Caco-2 (cell line): ENCODE measurements at regions of chr18 and their contacts with region 1.

Region 1: GRCh38 chr18:12744103-12744502 is 41.3 kb downstream of the PSMG2 start:
- DNase-seq: peak in 1 of 2 experiments; percentile 38
- H3K4me3 ChIP-seq: no peak overlapping the region
- H3K4me3 Mint-ChIP-seq: no peak overlapping the region
- H3K27ac Mint-ChIP-seq: no peak overlapping the region
- H3K4me1 ChIP-seq: peaks cover 8% of the 10 kb centered on the region; the same call in 1 of the 2 replicates
- H3K4me1 Mint-ChIP-seq: no peaks in the 10 kb centered on the region
- H3K27me3 ChIP-seq: no peaks in the 10 kb centered on the region
- H3K27me3 Mint-ChIP-seq: no peaks in the 10 kb centered on the region
- CTCF ChIP-seq: peak; percentile 31 to 49

Region 2: DNA sequence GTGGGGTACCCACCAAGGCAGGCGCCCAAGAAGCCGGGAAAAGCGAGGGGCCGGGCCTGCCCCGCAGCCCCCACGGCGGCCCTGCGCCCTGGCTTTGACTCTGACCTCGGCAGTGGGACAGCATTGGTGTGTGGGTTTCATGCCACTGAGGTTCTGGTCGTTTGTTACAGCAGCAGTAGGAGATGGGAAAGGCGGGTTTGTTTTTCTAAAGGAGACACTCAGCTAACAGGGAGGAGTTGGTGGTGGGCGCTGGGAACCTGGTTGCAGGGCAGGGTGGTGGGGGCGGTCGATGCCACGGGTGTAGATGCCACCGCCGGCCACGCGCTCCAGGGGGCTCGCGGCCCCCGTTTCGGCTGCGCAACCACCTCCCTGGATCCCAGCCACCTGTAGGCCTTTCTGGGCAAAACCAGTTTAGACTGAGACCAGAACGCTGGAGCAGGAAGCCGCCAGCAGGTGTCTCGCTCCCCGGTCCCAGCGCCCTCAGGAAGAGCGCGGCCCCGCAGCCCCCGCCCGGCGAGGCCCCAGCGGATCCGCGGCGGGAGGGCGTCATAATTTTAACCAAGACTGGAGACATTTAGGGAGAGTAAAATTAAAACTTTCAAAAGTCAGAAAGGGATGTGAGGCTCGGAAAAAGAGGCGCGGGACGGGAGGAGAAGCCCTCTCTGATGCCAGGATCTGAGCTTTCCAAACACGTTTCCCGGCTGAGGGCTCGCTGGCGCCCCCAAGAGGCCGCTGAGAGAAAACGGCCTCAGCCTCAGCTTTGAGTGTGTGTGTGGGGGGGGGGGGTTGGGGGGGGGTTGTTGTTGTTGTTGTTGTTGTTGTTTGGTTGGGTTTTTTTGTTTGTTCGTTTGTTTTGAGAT is 472.5 kb before region 1 on chr18:
- CTCF ChIA-PET with region 1: no interaction called
- POLR2A ChIA-PET with region 1: no interaction called
- intact Hi-C with region 1: no loop called
- DNase-seq: peak; percentile 81 to 88
- H3K4me3 ChIP-seq: peak overlapping the region; percentile 44
- H3K4me3 Mint-ChIP-seq: peak overlapping the region; percentile 79
- H3K27ac Mint-ChIP-seq: peak overlapping the region; percentile 56
- H3K4me1 ChIP-seq: no peaks in the 10 kb centered on the region
- H3K4me1 Mint-ChIP-seq: no peaks in the 10 kb centered on the region
- H3K27me3 ChIP-seq: no peaks in the 10 kb centered on the region
- H3K27me3 Mint-ChIP-seq: no peaks in the 10 kb centered on the region
- CTCF ChIP-seq: peak; percentile 80 to 84

Region 3: GRCh38 chr18:12442946-12443345 is 301.2 kb before region 1 on chr18:
- CTCF ChIA-PET with region 1: no interaction called
- POLR2A ChIA-PET with region 1: no interaction called
- intact Hi-C with region 1: no loop called
- DNase-seq: no peak
- H3K4me3 ChIP-seq: no peak overlapping the region
- H3K4me3 Mint-ChIP-seq: no peak overlapping the region
- H3K27ac Mint-ChIP-seq: no peak overlapping the region
- H3K4me1 ChIP-seq: no peaks in the 10 kb centered on the region
- H3K4me1 Mint-ChIP-seq: no peaks in the 10 kb centered on the region
- H3K27me3 ChIP-seq: no peaks in the 10 kb centered on the region
- H3K27me3 Mint-ChIP-seq: no peaks in the 10 kb centered on the region
- CTCF ChIP-seq: no peak

Region 4: DNA sequence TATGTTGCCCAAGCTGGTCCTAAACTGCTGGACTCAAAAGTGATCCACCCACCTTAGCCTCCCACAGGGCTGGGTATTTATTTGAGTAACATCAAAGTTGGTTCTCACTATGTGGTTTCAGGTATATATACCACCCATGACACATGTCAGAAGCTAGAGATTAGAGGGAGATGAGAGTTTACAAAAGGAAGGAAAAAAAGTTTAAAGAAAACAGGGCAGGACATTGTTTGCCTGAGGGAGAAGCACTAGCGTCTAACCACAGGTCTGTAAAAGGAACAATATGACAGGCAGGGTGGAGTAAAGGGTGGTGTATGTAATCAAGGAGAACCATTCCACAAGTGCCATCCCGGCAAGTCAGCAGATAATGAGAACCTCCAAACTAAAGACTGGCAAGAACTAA is 50.1 kb before region 1 on chr18:
- CTCF ChIA-PET with region 1: no interaction called
- POLR2A ChIA-PET with region 1: no interaction called
- intact Hi-C with region 1: no loop called
- DNase-seq: no peak
- H3K4me3 ChIP-seq: no peak overlapping the region
- H3K4me3 Mint-ChIP-seq: no peak overlapping the region
- H3K27ac Mint-ChIP-seq: peak overlapping the region; percentile 29
- H3K4me1 ChIP-seq: peaks cover 15% of the 10 kb centered on the region
- H3K4me1 Mint-ChIP-seq: peaks cover 16% of the 10 kb centered on the region
- H3K27me3 ChIP-seq: no peaks in the 10 kb centered on the region
- H3K27me3 Mint-ChIP-seq: no peaks in the 10 kb centered on the region
- CTCF ChIP-seq: no peak

Region 5: GRCh38 chr18:12768625-12769024 is 24.5 kb after region 1 on chr18:
- CTCF ChIA-PET with region 1: interaction called, 3 read pairs
- POLR2A ChIA-PET with region 1: no interaction called
- intact Hi-C with region 1: loop called (anchors 1 kb)
- DNase-seq: no peak
- H3K4me3 ChIP-seq: no peak overlapping the region
- H3K4me3 Mint-ChIP-seq: no peak overlapping the region
- H3K27ac Mint-ChIP-seq: no peak overlapping the region
- H3K4me1 ChIP-seq: peaks cover 23% of the 10 kb centered on the region
- H3K4me1 Mint-ChIP-seq: peaks cover 9% of the 10 kb centered on the region
- H3K27me3 ChIP-seq: no peaks in the 10 kb centered on the region
- H3K27me3 Mint-ChIP-seq: no peaks in the 10 kb centered on the region
- CTCF ChIP-seq: no peak

Region 6: GRCh38 chr18:12890506-12890905 is 146.4 kb after region 1 on chr18:
- CTCF ChIA-PET with region 1: interaction called, 4 read pairs
- POLR2A ChIA-PET with region 1: no interaction called
- intact Hi-C with region 1: loop called (anchors 1 kb)
- DNase-seq: peak in 1 of 2 experiments; percentile 46
- H3K4me3 ChIP-seq: no peak overlapping the region
- H3K4me3 Mint-ChIP-seq: no peak overlapping the region
- H3K27ac Mint-ChIP-seq: no peak overlapping the region
- H3K4me1 ChIP-seq: no peaks in the 10 kb centered on the region
- H3K4me1 Mint-ChIP-seq: peaks cover 8% of the 10 kb centered on the region
- H3K27me3 ChIP-seq: no peaks in the 10 kb centered on the region
- H3K27me3 Mint-ChIP-seq: no peaks in the 10 kb centered on the region
- CTCF ChIP-seq: peak; percentile 32 to 57